OCI-LY7 (cell line): ENCODE measurements at regions of chr4 and their contacts with region 1.

Region 1: DNA sequence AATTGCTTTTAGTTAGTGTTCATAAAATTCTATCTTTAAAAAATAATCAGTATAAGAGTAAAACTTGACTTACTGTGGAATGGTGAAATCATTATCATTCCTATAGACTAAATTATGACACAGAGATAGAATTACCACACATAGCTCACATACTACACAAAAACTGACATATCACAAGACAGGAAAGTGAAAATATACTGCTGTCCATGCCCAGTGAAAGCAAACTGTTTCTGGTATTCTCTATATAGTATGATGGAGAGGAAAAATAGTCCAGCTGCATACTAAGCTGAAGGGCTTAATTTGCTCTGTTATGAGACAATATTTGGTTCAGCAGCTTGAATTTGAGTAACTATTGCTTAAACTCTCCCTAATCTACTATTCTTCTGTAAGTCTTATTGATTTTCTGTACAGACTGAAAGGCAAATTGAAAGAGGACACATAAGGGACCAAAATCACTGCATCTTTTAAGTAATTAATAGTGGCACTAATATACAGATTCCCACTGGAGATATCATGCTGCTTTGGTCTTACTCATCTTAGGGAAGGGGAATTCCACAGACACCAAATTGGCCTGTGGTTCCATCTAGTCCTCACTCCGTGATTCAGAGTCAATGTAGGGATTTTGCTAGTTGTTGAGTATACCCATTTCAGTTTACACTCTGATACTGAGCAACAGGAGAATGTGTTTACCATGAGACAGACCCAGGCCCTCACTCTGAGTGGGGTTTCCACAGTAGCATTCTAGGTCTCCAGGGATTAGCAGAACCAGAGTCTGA is 47.4 kb upstream of the AGA start:
- DNase-seq: no peak
- H3K4me3 ChIP-seq: no peak overlapping the region
- H3K27ac ChIP-seq: no peak overlapping the region
- H3K4me1 ChIP-seq: no peaks in the 10 kb centered on the region
- CTCF ChIP-seq: no peak

Region 2: DNA sequence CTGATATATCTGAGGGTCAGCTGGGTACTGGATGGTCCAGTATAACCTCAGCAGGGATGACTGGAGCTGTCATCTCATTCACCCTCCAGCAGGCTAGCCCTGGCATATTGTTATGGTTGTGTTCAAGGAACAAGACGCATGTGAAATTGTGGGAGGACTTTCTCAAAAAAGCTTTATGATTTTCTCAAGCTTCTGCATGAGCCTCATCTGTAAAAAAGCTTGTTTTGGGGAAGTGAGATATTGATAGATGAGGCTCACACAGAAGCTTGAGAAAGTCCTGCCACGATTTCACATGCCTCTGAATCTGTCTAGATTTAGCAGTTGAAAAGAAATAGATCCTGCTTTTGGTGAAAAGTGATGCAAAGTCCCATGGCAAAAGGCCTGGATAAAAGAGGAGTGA is 1076.5 kb before region 1 on chr4:
- CTCF ChIA-PET with region 1: no interaction called
- POLR2A ChIA-PET with region 1: no interaction called
- intact Hi-C with region 1: loop called (anchors 5 kb)
- DNase-seq: no peak
- H3K4me3 ChIP-seq: no peak overlapping the region
- H3K27ac ChIP-seq: no peak overlapping the region
- H3K4me1 ChIP-seq: no peaks in the 10 kb centered on the region
- CTCF ChIP-seq: no peak

Region 3: DNA sequence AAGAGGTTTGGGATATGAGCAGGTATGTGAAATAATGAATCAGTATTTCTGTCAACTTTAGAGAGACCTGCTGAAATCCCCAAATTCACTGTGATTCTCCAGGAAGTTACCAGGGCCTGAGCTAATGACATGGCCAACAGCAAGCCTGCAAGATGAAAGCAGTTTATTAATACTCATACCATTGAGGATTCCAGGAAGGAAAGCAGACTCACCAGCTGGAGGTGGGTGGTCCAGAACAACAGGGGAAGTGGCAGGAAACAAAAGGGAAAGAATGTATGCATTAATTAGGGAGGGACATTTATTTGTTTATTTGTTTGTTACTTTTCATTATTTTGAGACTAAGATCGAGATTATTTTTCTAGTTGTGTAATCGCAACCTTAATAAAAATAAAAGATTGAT is 149.2 kb after region 1 on chr4:
- CTCF ChIA-PET with region 1: no interaction called
- POLR2A ChIA-PET with region 1: no interaction called
- intact Hi-C with region 1: no loop called
- DNase-seq: no peak
- H3K4me3 ChIP-seq: no peak overlapping the region
- H3K27ac ChIP-seq: no peak overlapping the region
- H3K4me1 ChIP-seq: no peaks in the 10 kb centered on the region
- CTCF ChIP-seq: no peak

Region 4: DNA sequence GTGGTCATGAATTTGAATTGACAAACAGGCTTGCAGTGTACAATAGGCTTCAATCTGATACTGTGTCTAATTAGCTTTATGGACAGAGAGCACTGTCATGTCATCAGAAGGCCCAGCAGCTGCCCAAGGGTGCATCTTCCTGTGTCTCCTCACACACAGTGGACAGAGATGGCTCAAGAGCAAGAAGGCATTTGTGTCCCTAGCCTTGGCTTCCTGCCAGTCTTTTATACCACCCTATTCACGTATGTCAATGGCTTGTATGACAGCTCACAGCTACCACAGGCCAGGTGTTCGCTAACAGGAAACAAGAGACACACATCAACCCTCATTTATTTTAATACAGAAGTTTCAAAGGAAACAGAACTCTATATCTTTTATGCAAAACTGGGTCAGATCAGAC is 826.6 kb after region 1 on chr4:
- CTCF ChIA-PET with region 1: no interaction called
- POLR2A ChIA-PET with region 1: no interaction called
- intact Hi-C with region 1: no loop called
- DNase-seq: no peak
- H3K4me3 ChIP-seq: no peak overlapping the region
- H3K27ac ChIP-seq: no peak overlapping the region
- H3K4me1 ChIP-seq: no peaks in the 10 kb centered on the region
- CTCF ChIP-seq: no peak